ENCODE measurements at regions of chr18 and their contacts with region 1.

Region 1: GRCh38 chr18:36284671-36285295 is 12.7 kb upstream of the FHOD3 start:
- DNase-seq: no peak

Region 2: DNA sequence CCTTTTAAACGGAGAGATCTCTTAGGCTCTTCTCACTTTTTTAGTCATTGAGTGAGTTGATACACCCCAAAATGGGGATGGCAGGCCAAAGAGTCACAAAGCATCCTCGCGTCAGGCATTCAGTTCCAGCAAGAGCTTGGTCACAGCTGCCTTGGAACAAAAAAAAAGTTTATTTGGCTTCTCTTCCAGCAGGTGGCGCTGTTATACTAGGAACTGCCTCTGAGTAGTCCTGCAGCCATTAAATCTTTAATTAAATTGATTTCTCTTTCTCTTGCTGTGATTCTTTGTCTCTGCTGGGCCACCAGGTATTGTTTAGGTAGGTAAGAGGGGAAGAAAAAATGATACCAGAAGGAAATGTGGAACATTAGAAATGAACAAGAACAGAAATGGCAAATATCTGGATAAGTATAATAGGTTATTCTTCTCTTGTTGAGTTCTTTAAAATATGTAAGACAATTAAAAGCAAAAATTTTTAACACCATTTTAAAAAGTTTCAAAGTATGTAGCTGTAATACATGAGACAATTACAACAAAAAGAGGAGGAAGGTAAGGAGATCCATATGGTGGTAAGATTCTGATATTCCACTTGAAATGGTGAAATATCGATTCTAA is 528.2 kb before region 1 on chr18:
- intact Hi-C with region 1: loop called (anchors 10 kb)
- DNase-seq: no peak

Region 3: GRCh38 chr18:36015629-36016028 is 269.2 kb before region 1 on chr18:
- intact Hi-C with region 1: loop called (anchors 5 kb)
- DNase-seq: no peak

Region 4: GRCh38 chr18:36095936-36096519 is 188.8 kb before region 1 on chr18:
- intact Hi-C with region 1: loop called (anchors 2 kb)
- DNase-seq: no peak

Region 5: GRCh38 chr18:36186911-36187834 is 97.6 kb before region 1 on chr18 and contains the start of gene MOCOS:
- intact Hi-C with region 1: loop called (anchors 5 kb)
- DNase-seq: peak; percentile 85
- total RNA-seq, gene MOCOS: 0.38 TPM

Measured in cardiac septum (tissue), 1 donor.